ENCODE measurements at regions of chr12 and their contacts with region 1.

Region 1: GRCh38 chr12:92582475-92582874 is 120.3 kb upstream of the PLEKHG7 start:
- DNase-seq: no peak
- ATAC-seq: no peak
- H3K4me3 ChIP-seq: no peak overlapping the region
- H3K27ac ChIP-seq: no peak overlapping the region
- H3K4me1 ChIP-seq: peaks cover 3% of the 10 kb centered on the region
- H3K27me3 ChIP-seq: no peaks in the 10 kb centered on the region
- CTCF ChIP-seq: no peak
- EP300 ChIP-seq: no peak
- POLR2A ChIP-seq: no peak
- RAD21 ChIP-seq: no peak

Region 2: GRCh38 chr12:91388552-91388965 is 1193.9 kb before region 1 on chr12:
- CTCF ChIA-PET with region 1: no interaction called
- POLR2A ChIA-PET with region 1: interaction called, 10 read pairs
- RAD21 ChIA-PET with region 1: no interaction called
- SMC1A ChIA-PET with region 1: no interaction called
- in situ Hi-C with region 1: no loop called
- intact Hi-C with region 1: no loop called
- DNase-seq: no peak
- ATAC-seq: no peak
- H3K4me3 ChIP-seq: no peak overlapping the region
- H3K27ac ChIP-seq: no peak overlapping the region
- H3K4me1 ChIP-seq: no peaks in the 10 kb centered on the region
- H3K27me3 ChIP-seq: no peaks in the 10 kb centered on the region
- CTCF ChIP-seq: no peak
- EP300 ChIP-seq: no peak
- POLR2A ChIP-seq: no peak
- RAD21 ChIP-seq: no peak

Region 3: DNA sequence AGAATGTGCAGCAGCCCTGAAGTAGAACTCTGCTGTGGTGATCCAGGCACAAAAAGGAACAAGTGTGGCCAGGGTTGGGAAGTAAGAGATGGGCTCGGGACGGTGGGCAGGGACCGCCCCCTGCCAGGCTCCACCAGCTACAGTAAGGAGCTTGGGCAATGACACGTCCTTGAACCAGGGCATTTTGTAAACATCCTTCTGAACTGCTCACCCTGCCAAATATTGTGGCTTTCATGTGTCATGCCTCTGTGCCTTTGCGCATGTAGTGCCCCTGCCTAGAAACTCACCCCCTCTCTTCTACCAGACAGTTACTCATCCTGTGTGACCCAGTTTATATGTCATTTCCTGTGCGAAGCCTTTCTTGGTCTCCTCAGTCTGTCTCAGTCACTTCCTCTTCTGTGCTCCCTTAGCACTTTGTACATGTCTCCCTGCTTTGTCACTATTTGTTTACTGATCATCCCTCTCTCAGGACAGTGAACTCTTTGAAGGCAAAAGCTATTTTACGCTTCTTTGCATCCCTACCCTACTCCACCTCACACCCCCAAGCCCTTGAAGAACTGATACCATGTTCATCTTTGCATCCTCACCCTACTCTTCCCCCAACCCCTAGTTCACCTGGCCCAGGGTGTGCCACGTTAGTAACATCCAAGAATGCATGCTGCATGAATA is 11.4 kb after region 1 on chr12:
- CTCF ChIA-PET with region 1: interaction called, 4 read pairs
- POLR2A ChIA-PET with region 1: no interaction called
- RAD21 ChIA-PET with region 1: no interaction called
- SMC1A ChIA-PET with region 1: interaction called, 21 read pairs
- in situ Hi-C with region 1: no loop called
- intact Hi-C with region 1: no loop called
- DNase-seq: peak; percentile 96
- ATAC-seq: peak; percentile 99
- H3K4me3 ChIP-seq: no peak overlapping the region
- H3K27ac ChIP-seq: peak overlapping the region; percentile 58
- H3K4me1 ChIP-seq: peaks cover 15% of the 10 kb centered on the region
- H3K27me3 ChIP-seq: no peaks in the 10 kb centered on the region
- CTCF ChIP-seq: no peak
- EP300 ChIP-seq: peak; percentile 93 to 96; a peak in 3 of 4 replicates
- POLR2A ChIP-seq: peak; percentile 57; the same call in 1 of the 2 replicates
- RAD21 ChIP-seq: no peak

Measured in GM12878 (cell line).